Activated B cell treated with CpG ODN at 0.5 μM for 24 hours (primary cell): ENCODE measurements at regions of chr16 and their contacts with region 1.

Region 1: DNA sequence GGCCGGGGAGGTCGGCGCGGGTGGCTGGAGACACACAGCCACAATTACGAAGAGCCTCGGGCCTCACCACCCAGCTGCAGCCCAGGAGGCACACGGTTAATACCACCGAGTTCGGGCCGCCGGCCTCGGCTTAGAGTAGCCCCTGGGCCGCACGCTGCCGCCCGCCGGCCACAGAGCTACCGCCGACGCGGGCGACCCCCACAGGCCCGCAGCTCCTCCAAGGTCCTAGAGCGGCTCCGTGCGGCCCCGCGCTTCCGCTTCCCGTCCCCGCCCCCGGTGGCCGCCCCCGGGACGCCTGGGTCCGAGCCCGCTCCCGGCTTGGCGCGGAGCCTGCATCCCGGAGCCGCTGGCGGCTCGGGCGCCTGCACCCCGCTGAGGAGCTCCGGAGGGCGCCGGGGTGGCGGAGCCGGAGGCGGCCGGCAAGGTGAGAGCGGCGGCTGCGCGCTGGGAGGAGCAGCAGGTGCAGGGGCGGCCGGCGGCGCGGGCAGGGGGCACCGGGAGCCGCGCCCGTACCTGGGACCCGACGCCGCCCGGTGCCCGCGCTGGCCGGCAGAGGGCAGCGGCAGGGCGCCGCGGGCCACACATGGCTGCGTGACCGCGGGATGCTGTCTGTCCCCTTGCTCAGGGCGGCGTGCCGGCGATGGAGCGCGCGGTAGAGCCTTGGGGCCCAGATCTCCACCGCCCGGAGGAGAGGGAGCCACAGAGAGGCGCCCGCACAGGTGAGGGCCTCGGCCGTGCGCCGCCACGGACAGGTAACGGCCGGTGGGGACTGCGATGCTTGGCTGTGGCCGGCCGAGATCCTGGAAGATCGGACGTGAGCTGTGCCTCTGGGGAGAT is at the start of gene ZNF48:
- DNase-seq: peak; percentile 77
- ATAC-seq: peak; percentile 96
- H3K4me3 Mint-ChIP-seq: peak within 1 kb of the TSS; percentile 91
- H3K27ac Mint-ChIP-seq: peak within 1 kb of the TSS; percentile 78
- H3K4me1 Mint-ChIP-seq: peaks cover 31% of the 10 kb centered on the region
- H3K27me3 Mint-ChIP-seq: no peaks in the 10 kb centered on the region
- CTCF ChIP-seq: no peak
- total RNA-seq, gene ZNF48: 11.7 and 13.0 TPM in 2 replicates

Region 2: GRCh38 chr16:30370444-30371247 is 24.7 kb before region 1 on chr16 and contains the start of gene TBC1D10B:
- CTCF ChIA-PET with region 1: interaction called, 7 read pairs
- POLR2A ChIA-PET with region 1: interaction called, 20 read pairs
- intact Hi-C with region 1: loop called (anchors 1 kb)
- DNase-seq: peak; percentile 92
- ATAC-seq: peak; percentile 83
- H3K4me3 Mint-ChIP-seq: peak within 1 kb of the TSS; percentile 87
- H3K27ac Mint-ChIP-seq: peak within 1 kb of the TSS; percentile 86
- H3K4me1 Mint-ChIP-seq: peaks cover 52% of the 10 kb centered on the region
- H3K27me3 Mint-ChIP-seq: no peaks in the 10 kb centered on the region
- CTCF ChIP-seq: no peak
- total RNA-seq, gene TBC1D10B: 46.3 and 50.2 TPM in 2 replicates

Region 3: GRCh38 chr16:30407102-30407803 is 11.9 kb after region 1 on chr16 and contains the start of gene ZNF771:
- CTCF ChIA-PET with region 1: interaction called, 14 read pairs
- POLR2A ChIA-PET with region 1: interaction called, 33 read pairs
- intact Hi-C with region 1: loop called (anchors 1 kb)
- DNase-seq: peak; percentile 90
- ATAC-seq: peak; percentile 89
- H3K4me3 Mint-ChIP-seq: peak within 1 kb of the TSS; percentile 89
- H3K27ac Mint-ChIP-seq: peak within 1 kb of the TSS; percentile 90
- H3K4me1 Mint-ChIP-seq: peaks cover 27% of the 10 kb centered on the region
- H3K27me3 Mint-ChIP-seq: no peaks in the 10 kb centered on the region
- CTCF ChIP-seq: no peak
- total RNA-seq, gene ZNF771: 4.4 and 5.2 TPM in 2 replicates

Region 4: GRCh38 chr16:30600215-30600614 is 204.8 kb after region 1 on chr16:
- CTCF ChIA-PET with region 1: no interaction called
- POLR2A ChIA-PET with region 1: no interaction called
- intact Hi-C with region 1: no loop called
- DNase-seq: no peak
- ATAC-seq: no peak
- H3K4me3 Mint-ChIP-seq: no peak overlapping the region
- H3K27ac Mint-ChIP-seq: no peak overlapping the region
- H3K4me1 Mint-ChIP-seq: peaks cover 3% of the 10 kb centered on the region
- H3K27me3 Mint-ChIP-seq: no peaks in the 10 kb centered on the region
- CTCF ChIP-seq: no peak